ENCODE measurements at regions of chr1 and their contacts with region 1.

Region 1: DNA sequence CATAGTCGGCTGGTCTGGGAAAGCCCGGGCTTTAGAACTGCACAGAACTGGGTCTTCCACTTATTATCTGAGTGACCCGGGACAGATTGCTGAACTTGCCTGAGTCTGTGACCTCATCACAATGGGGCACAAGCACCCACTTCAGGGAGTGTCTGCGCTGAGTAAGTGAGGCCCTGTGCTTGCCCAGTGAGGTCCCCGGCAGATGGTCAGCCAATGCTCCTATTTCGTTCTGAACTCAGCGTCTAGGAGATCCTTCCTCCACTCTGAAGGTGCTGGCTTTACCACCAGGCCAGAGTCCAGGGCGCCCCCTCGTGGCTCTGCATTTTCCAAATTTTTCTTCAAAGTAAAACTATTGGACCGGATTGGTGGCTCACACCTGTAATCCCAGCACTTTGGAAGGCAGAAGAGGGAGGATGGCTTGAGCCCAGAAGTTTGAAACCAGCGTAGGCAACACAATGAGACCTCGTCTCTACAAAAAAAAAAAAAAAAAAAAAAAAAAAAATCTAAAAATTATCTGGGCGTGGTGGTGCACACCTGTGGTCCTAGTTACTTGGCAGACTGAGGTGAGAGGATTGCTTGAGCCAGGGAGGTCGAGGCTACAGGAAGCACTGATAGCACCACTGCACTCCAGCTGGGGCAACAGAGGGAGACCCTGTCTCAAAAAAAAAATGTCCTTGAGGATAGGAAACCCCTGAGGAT is 61.7 kb downstream of the FCRL5 start:
- DNase-seq: peak in 5 of 6 donors; percentile 37 to 91 (median 69)
- ATAC-seq: peak; percentile 79 to 92 (median 88)
- H3K4me3 ChIP-seq: no peak overlapping the region
- H3K27ac ChIP-seq: no peak overlapping the region
- H3K4me1 ChIP-seq: no peaks in the 10 kb centered on the region
- H3K27me3 ChIP-seq: peaks cover 0 to 4% (median 0%) of the 10 kb centered on the region in 4 donors
- CTCF ChIP-seq: peak; percentile 11 to 33 (median 30)

Region 2: DNA sequence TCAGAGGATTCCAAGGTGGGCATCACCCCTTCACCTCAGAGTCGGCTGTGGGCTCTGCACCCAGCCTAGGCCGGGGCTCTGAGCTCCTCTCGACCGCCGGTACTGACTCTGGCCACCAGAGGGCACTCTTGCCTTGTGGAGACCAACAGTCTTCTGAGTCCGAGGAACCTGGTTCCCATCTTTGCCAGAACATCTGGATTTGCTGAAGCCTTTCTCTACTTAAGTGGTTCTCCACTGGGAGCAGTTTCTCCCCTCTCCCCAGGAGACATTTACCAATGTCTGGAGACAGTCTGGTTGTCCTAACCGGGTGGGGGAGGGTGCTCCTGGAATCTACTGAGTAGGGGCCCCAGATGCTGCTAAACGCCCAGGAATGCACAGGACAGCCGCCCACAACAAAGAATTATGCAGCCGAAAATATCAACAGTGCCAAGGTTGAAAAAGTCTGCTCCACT is 400.4 kb before region 1 on chr1:
- intact Hi-C with region 1: loop called in 1 of 3 experiments (anchors 10 kb)
- DNase-seq: peak; percentile 62 to 97 (median 88)
- ATAC-seq: peak; percentile 75 to 98 (median 94)
- H3K4me3 ChIP-seq: no peak overlapping the region
- H3K27ac ChIP-seq: no peak overlapping the region
- H3K4me1 ChIP-seq: no peaks in the 10 kb centered on the region
- H3K27me3 ChIP-seq: no peaks in the 10 kb centered on the region
- CTCF ChIP-seq: peak; percentile 94 to 96 (median 96)

Region 3: GRCh38 chr1:157163273-157164127 is 327.1 kb before region 1 on chr1:
- intact Hi-C with region 1: loop called in 1 of 3 experiments (anchors 10 kb)
- DNase-seq: peak; percentile 45 to 92 (median 80)
- ATAC-seq: peak; percentile 73 to 94 (median 90)
- H3K4me3 ChIP-seq: no peak overlapping the region
- H3K27ac ChIP-seq: no peak overlapping the region
- H3K4me1 ChIP-seq: no peaks in the 10 kb centered on the region
- H3K27me3 ChIP-seq: no peaks in the 10 kb centered on the region
- CTCF ChIP-seq: peak; percentile 73 to 96 (median 90)

Region 4: DNA sequence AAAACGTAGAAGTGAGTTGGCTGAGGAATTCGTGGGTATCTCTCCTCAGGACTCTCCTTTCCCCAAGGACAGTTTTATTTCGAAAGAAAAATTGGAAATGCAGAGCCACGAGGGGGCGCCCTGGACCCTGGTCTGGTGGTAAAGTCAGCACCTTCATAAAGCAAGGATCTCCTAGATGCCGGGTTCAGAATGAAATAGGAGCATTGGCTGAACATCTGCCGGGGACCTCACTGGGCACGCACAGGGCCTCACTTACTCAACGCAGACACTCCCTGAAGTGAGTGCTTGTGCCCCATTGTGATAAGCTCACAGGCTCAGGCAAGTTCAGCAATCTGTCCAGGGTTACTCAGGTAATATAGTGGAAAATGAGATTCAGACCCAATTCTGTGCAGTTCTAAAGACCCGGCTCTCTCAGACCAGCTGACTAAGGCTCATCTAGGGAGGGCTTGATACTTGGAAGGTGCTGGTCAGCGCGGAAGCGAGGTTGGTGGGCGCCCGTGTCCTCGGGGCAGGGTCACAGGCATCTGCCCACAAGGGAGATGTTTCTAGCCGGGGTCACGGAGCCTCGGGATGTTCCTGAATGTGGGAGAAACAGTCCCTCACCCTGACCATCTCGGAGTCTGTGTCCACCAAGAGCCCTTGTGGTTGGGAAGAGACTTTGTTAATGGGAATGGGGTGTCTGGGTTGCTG is 296.8 kb before region 1 on chr1:
- intact Hi-C with region 1: loop called in 2 of 3 experiments (anchors 5 kb)
- DNase-seq: peak in 5 of 6 donors; percentile 52 to 94 (median 75)
- ATAC-seq: peak in 3 of 4 donors; percentile 31 to 53 (median 45)
- H3K4me3 ChIP-seq: no peak overlapping the region
- H3K27ac ChIP-seq: no peak overlapping the region
- H3K4me1 ChIP-seq: peaks cover 0 to 10% (median 6%) of the 10 kb centered on the region in 3 donors
- H3K27me3 ChIP-seq: peaks cover 0 to 5% (median 2%) of the 10 kb centered on the region in 4 donors
- CTCF ChIP-seq: peak; percentile 31 to 59 (median 44)

Region 5: GRCh38 chr1:157288996-157289395 is 201.6 kb before region 1 on chr1:
- intact Hi-C with region 1: no loop called
- DNase-seq: no peak
- ATAC-seq: no peak
- H3K4me3 ChIP-seq: no peak overlapping the region
- H3K27ac ChIP-seq: no peak overlapping the region
- H3K4me1 ChIP-seq: no peaks in the 10 kb centered on the region
- H3K27me3 ChIP-seq: no peaks in the 10 kb centered on the region
- CTCF ChIP-seq: no peak

Region 6: DNA sequence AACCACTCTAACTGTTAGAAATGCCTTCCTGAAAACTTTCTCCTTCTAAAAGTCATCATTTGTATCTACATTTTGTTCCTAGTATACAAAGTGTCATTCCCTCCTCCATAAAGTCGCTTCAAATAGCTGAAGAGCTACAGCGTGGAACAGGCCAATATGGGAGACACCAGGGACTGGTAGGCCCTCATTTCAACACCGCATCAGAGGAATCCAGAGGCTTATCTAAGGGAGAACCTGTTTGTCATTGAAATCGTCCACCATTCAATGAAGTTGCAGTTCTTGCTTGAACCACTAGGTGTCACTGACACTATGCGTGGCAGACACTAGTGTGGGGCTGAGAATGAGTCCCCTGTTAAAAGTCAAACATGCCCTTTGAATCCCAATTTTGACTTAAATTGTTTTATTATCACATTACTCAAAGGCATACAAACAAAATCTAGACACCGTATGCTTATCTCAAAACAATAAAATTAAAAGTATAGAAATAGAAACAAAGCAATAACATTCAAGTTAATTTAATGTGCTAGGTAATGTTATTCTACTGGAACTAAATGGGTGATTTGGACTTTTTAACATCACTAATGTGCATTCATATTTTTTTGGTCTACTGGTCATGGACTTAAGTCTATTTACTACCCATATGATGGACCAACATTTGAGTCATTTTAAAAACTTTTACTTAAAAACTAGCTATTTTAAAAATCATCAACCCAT is 120.7 kb before region 1 on chr1:
- intact Hi-C with region 1: loop called in 2 of 3 experiments (anchors 5 kb)
- DNase-seq: peak in 2 of 6 donors; percentile 28 to 54
- ATAC-seq: peak; percentile 53 to 97 (median 92)
- H3K4me3 ChIP-seq: no peak overlapping the region
- H3K27ac ChIP-seq: no peak overlapping the region
- H3K4me1 ChIP-seq: no peaks in the 10 kb centered on the region
- H3K27me3 ChIP-seq: no peaks in the 10 kb centered on the region
- CTCF ChIP-seq: peak; percentile 74 to 93 (median 84)